Activated CD4-positive, alpha-beta memory T cell treated with anti-CD3 and anti-CD28 coated beads, Interleukin-2, amount 10 ng/mL, durations not matched to agents 7 days and 5 days (primary cell): ENCODE measurements at regions of chr9 and their contacts with region 1.

Region 1: GRCh38 chr9:94881023-94881422 is 154.5 kb downstream of the AOPEP start:
- DNase-seq: no peak
- H3K4me3 Mint-ChIP-seq: no peak overlapping the region
- H3K27ac Mint-ChIP-seq: no peak overlapping the region
- H3K4me1 Mint-ChIP-seq: peaks cover 47% of the 10 kb centered on the region
- H3K27me3 Mint-ChIP-seq: no peaks in the 10 kb centered on the region

Region 2: DNA sequence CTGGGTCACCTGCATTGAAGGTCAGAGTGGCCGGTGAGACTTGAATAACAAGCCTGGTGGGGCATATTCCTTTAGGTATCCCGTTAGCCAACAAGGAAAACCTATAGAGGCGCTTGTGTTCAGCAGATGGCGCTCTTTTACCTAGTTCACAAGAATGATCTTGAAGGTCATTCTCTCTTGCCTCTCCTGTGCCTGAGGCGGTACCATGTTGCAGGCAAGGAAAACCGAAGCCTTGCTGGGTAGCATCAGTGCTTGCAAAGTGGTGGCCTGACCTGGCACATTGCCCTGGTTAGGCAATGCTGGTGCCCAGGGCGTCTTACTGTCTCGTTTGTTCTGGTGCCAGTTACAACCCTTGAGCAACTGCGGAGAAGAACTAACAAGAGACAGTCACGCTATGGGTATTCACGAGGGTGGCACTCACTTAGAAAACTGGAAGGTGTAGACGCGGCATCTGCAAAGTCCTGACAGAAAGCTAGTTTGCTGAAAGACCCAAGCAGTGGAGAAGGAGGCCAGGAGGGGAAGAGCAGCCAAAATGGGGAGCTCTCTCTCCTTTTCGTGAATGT is 97.8 kb before region 1 on chr9:
- CTCF ChIA-PET with region 1: interaction called, 12 read pairs
- POLR2A ChIA-PET with region 1: no interaction called
- DNase-seq: peak; percentile 55
- H3K4me3 Mint-ChIP-seq: no peak overlapping the region
- H3K27ac Mint-ChIP-seq: no peak overlapping the region
- H3K4me1 Mint-ChIP-seq: peaks cover 16% of the 10 kb centered on the region
- H3K27me3 Mint-ChIP-seq: no peaks in the 10 kb centered on the region

Region 3: DNA sequence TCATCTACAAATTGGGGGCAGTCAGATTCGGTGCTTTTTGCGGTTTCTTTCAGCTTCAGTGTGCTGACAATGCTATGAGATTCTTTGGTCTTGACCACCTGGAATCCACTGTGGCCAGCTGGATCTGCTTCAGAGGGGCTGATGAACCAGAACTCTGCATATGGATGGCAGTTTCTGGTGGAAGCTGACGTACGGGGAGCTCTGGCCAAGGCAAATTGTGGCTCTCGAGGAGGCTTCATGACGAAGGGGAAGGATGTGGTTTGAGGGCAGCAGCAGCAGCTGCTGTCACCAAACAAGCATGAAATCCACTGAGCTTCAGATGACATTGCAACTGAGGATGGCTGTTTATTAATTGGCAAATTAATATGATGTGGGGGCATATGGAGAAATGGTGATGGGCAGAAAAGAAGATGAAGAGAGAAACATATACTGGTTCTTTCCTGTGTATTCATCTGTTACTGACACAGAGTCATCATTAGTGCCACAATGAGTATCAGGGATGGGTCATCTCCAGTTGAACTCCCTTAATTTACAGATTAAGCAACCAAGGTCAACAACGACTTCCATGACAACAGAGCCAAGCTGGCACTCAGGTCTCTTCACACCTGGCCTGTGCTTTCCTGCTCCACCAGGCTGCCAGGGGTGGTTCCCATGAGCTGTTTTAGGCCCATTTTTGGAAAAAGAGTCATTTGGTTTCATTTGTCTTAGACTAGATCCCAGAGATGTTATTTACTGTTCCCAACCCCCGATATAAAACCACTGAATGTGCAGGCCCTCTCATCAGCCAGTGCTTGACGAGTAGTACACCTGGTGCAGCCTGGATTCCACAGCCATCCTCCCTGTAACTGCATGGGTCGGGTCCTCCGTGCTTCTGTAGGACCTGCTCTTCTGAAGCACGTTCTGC is 19.8 kb before region 1 on chr9:
- CTCF ChIA-PET with region 1: interaction called, 7 read pairs
- POLR2A ChIA-PET with region 1: interaction called, 27 read pairs
- DNase-seq: peak; percentile 87
- H3K4me3 Mint-ChIP-seq: peak overlapping the region; percentile 54
- H3K27ac Mint-ChIP-seq: peak overlapping the region; percentile 90
- H3K4me1 Mint-ChIP-seq: peaks cover 47% of the 10 kb centered on the region
- H3K27me3 Mint-ChIP-seq: no peaks in the 10 kb centered on the region